Dorsolateral prefrontal cortex (tissue), 120 donors: ENCODE measurements at regions of chr22 and their contacts with region 1.

Region 1: GRCh38 chr22:20268279-20269012 is at the start of gene RTN4R:
- DNase-seq: peak in 4 of 10 donors; percentile 28 to 79 (median 62)
- H3K4me3 ChIP-seq: peak within 1 kb of the TSS; percentile 31 to 78 (median 62)
- H3K27ac ChIP-seq: peak within 1 kb of the TSS in 49 of 59 donors; percentile 13 to 97 (median 64)
- H3K27me3 ChIP-seq: no peaks in the 10 kb centered on the region
- CTCF ChIP-seq: peak; percentile 23 to 81 (median 63)
- total RNA-seq, gene RTN4R: 14.5 to 68.2 (median 38.9) TPM

Region 2: GRCh38 chr22:20156611-20157429 is 111.6 kb before region 1 on chr22:
- intact Hi-C with region 1: loop called (anchors 1 to 5 kb)
- DNase-seq: peak; percentile 85 to 96 (median 92)
- H3K4me3 ChIP-seq: peak overlapping the region in 3 of 59 donors; percentile 16 to 25 (median 16)
- H3K27ac ChIP-seq: peak overlapping the region in 1 of 59 donors; percentile 43
- H3K27me3 ChIP-seq: no peaks in the 10 kb centered on the region
- CTCF ChIP-seq: peak; percentile 97 to 100 (median 99)

Region 3: DNA sequence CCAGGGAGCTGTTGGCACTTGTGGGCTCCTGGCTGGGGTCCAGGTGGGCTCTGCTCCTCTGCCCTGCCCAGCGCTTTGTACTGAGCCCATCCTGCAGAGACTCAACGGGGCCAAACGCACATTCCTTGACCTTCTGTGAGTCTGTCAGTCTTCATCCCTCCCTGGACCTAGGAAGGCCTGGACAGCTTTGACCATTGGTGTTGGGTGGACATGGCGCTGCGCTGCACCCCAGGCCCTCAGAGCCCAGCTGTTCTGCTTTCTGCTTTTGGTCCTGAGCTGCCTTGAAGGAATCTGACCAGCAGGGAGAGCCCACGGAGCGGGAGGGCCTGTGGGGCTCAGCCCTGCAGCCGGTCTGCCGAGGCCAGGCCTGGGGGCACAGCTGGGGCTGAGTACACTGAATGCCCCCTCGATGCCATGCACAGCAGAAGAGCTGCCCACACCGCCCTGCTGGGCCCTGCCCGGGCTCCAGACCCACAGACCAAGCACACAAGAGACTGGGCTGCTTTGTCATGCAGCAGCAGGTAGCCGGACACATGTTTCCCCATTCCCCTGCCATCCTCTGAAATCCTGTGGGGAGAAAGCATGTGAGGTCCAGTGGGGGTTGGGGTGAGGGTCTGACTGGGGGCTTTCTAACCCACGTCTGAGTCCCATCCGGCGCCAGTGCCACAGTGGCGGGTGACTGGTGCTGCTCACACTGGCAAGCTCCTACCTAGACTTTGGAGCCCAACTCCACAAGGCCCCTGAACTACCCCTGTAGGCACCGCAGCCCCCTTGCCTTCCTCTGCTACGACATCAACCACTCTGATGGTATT is 93.5 kb before region 1 on chr22:
- intact Hi-C with region 1: loop called in 1 of 2 experiments (anchors 5 kb)
- DNase-seq: no peak
- H3K4me3 ChIP-seq: no peak overlapping the region
- H3K27ac ChIP-seq: no peak overlapping the region
- H3K27me3 ChIP-seq: no peaks in the 10 kb centered on the region
- CTCF ChIP-seq: peak in 16 of 56 donors; percentile 8 to 40 (median 16)